Activated CD4-positive, alpha-beta memory T cell treated with anti-CD3 and anti-CD28 coated beads for 36 hours (primary cell): ENCODE measurements at regions of chr13 and their contacts with region 1.

Region 1: GRCh38 chr13:28324181-28324789 is 170.6 kb downstream of the FLT1 start:
- DNase-seq: peak; percentile 65
- H3K4me3 Mint-ChIP-seq: no peak overlapping the region
- H3K27ac Mint-ChIP-seq: no peak overlapping the region
- H3K4me1 Mint-ChIP-seq: peaks cover 3% of the 10 kb centered on the region
- H3K27me3 Mint-ChIP-seq: peaks cover 3% of the 10 kb centered on the region

Region 2: GRCh38 chr13:28128030-28128429 is 196.3 kb before region 1 on chr13:
- CTCF ChIA-PET with region 1: no interaction called
- POLR2A ChIA-PET with region 1: no interaction called
- intact Hi-C with region 1: no loop called
- DNase-seq: no peak
- H3K4me3 Mint-ChIP-seq: no peak overlapping the region
- H3K27ac Mint-ChIP-seq: no peak overlapping the region
- H3K4me1 Mint-ChIP-seq: no peaks in the 10 kb centered on the region
- H3K27me3 Mint-ChIP-seq: no peaks in the 10 kb centered on the region

Region 3: GRCh38 chr13:28379371-28380083 is 55.2 kb after region 1 on chr13:
- CTCF ChIA-PET with region 1: no interaction called
- POLR2A ChIA-PET with region 1: no interaction called
- intact Hi-C with region 1: no loop called
- DNase-seq: no peak
- H3K4me3 Mint-ChIP-seq: no peak overlapping the region
- H3K27ac Mint-ChIP-seq: no peak overlapping the region
- H3K4me1 Mint-ChIP-seq: no peaks in the 10 kb centered on the region
- H3K27me3 Mint-ChIP-seq: peaks cover 5% of the 10 kb centered on the region

Region 4: GRCh38 chr13:28449826-28450773 is 125.8 kb after region 1 on chr13:
- CTCF ChIA-PET with region 1: no interaction called
- POLR2A ChIA-PET with region 1: no interaction called
- intact Hi-C with region 1: no loop called
- DNase-seq: no peak
- H3K4me3 Mint-ChIP-seq: no peak overlapping the region
- H3K27ac Mint-ChIP-seq: no peak overlapping the region
- H3K4me1 Mint-ChIP-seq: no peaks in the 10 kb centered on the region
- H3K27me3 Mint-ChIP-seq: peaks cover 6% of the 10 kb centered on the region

Region 5: DNA sequence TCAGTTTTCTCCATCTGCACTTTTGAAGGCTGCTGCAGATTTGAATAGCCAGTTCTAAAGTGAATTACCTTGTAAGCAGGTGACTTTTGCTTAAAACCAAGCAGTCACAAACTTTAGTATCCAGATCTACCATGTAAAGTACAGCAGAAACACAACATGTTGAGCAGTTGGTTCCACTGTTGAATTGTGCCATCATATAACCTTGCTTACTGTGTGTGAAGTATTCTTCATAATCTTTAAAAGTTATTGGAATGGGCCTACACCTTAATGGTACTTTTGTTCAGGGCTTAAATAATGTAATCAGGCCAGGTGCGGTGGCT is 472.6 kb after region 1 on chr13:
- CTCF ChIA-PET with region 1: interaction called, 44 read pairs
- POLR2A ChIA-PET with region 1: no interaction called
- intact Hi-C with region 1: loop called (anchors 1 kb)
- DNase-seq: no peak
- H3K4me3 Mint-ChIP-seq: no peak overlapping the region
- H3K27ac Mint-ChIP-seq: no peak overlapping the region
- H3K4me1 Mint-ChIP-seq: no peaks in the 10 kb centered on the region
- H3K27me3 Mint-ChIP-seq: peaks cover 8% of the 10 kb centered on the region

Region 6: DNA sequence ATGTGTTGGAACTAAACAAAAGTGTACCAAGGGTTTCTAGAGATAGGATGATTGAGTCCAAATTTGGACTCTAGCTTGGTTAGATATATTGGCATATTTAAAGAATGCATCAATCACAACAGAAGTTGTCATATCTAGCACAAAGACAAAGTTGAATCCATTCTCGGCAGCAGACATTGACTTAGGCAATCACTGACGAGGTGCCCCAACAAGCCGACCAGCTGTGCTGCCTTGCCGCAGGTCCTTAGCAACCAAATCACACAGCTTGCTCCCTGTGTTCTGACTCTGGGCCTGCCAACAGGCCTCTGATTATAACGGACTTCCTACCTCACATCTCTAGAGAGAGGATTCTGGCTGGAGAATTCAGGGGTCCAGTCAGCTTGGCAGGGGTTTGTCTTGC is 704.6 kb after region 1 on chr13:
- CTCF ChIA-PET with region 1: no interaction called
- POLR2A ChIA-PET with region 1: no interaction called
- intact Hi-C with region 1: no loop called
- DNase-seq: no peak
- H3K4me3 Mint-ChIP-seq: no peak overlapping the region
- H3K27ac Mint-ChIP-seq: no peak overlapping the region
- H3K4me1 Mint-ChIP-seq: no peaks in the 10 kb centered on the region
- H3K27me3 Mint-ChIP-seq: no peaks in the 10 kb centered on the region